ENCODE measurements at regions of chrX and their contacts with region 1.

Region 1: GRCh38 chrX:106999002-106999975 is 723 bp downstream of the MORC4 start:
- DNase-seq: peak; percentile 46 to 55 (median 55)
- H3K4me3 ChIP-seq: peak overlapping the region; percentile 23 to 53
- H3K4me3 Mint-ChIP-seq: peak overlapping the region; percentile 81 to 95 (median 92)
- H3K27ac ChIP-seq: peak overlapping the region; percentile 34
- H3K27ac Mint-ChIP-seq: peak overlapping the region; percentile 71 to 93 (median 81)
- H3K4me1 ChIP-seq: peaks cover 10% of the 10 kb centered on the region
- H3K4me1 Mint-ChIP-seq: peaks cover 5 to 22% (median 13%) of the 10 kb centered on the region in 4 donors
- H3K27me3 ChIP-seq: no peaks in the 10 kb centered on the region
- H3K27me3 Mint-ChIP-seq: no peaks in the 10 kb centered on the region

Region 2: GRCh38 chrX:106973433-106974149 is 25.7 kb before region 1 on chrX:
- CTCF ChIA-PET with region 1: no interaction called
- POLR2A ChIA-PET with region 1: no interaction called
- intact Hi-C with region 1: no loop called
- DNase-seq: no peak
- H3K4me3 ChIP-seq: no peak overlapping the region
- H3K4me3 Mint-ChIP-seq: no peak overlapping the region
- H3K27ac ChIP-seq: no peak overlapping the region
- H3K27ac Mint-ChIP-seq: no peak overlapping the region
- H3K4me1 ChIP-seq: no peaks in the 10 kb centered on the region
- H3K4me1 Mint-ChIP-seq: no peaks in the 10 kb centered on the region
- H3K27me3 ChIP-seq: no peaks in the 10 kb centered on the region
- H3K27me3 Mint-ChIP-seq: no peaks in the 10 kb centered on the region

Region 3: DNA sequence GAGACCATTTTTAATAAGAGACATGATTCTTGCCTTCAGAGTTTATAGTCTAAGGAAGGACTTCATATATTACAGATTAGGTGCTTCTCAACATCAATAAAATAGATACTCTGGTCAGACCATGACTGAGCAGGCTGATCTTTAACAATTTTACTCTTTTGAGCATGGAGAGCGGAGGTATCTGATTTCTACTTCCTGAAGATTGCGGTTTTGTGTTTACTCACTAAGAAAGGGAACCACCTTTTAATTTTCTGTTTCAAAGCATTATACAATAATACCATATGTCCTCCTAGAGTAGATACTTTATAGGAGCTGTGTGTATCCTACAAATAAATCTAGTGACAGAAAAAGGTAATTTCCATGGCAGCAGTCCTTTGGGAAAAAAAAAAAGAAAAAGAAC is 11.8 kb before region 1 on chrX:
- CTCF ChIA-PET with region 1: interaction called, 5 read pairs
- POLR2A ChIA-PET with region 1: interaction called, 9 read pairs
- intact Hi-C with region 1: loop called (anchors 1 kb)
- DNase-seq: peak in 2 of 5 donors; percentile 9 to 12
- H3K4me3 ChIP-seq: no peak overlapping the region
- H3K4me3 Mint-ChIP-seq: peak overlapping the region in 5 of 8 donors; percentile 7 to 51 (median 9)
- H3K27ac ChIP-seq: no peak overlapping the region
- H3K27ac Mint-ChIP-seq: peak overlapping the region in 1 of 7 donors; percentile 3
- H3K4me1 ChIP-seq: peaks cover 16% of the 10 kb centered on the region
- H3K4me1 Mint-ChIP-seq: peaks cover 3 to 13% (median 8%) of the 10 kb centered on the region in 4 donors
- H3K27me3 ChIP-seq: no peaks in the 10 kb centered on the region
- H3K27me3 Mint-ChIP-seq: no peaks in the 10 kb centered on the region

Region 4: GRCh38 chrX:107118322-107119147 is 119.2 kb after region 1 on chrX and contains the start of gene RBM41:
- CTCF ChIA-PET with region 1: interaction called, 4 read pairs
- POLR2A ChIA-PET with region 1: no interaction called
- intact Hi-C with region 1: loop called (anchors 5 kb)
- DNase-seq: peak; percentile 69 to 88 (median 75)
- H3K4me3 ChIP-seq: peak within 1 kb of the TSS; percentile 72 to 73
- H3K4me3 Mint-ChIP-seq: peak within 1 kb of the TSS; percentile 98 to 100 (median 99)
- H3K27ac ChIP-seq: peak within 1 kb of the TSS; percentile 59
- H3K27ac Mint-ChIP-seq: peak within 1 kb of the TSS; percentile 93 to 98 (median 97)
- H3K4me1 ChIP-seq: peaks cover 17% of the 10 kb centered on the region
- H3K4me1 Mint-ChIP-seq: peaks cover 22 to 47% (median 33%) of the 10 kb centered on the region in 4 donors
- H3K27me3 ChIP-seq: no peaks in the 10 kb centered on the region
- H3K27me3 Mint-ChIP-seq: no peaks in the 10 kb centered on the region
- total RNA-seq, gene RBM41: 27.8 to 29.8 TPM

Region 5: DNA sequence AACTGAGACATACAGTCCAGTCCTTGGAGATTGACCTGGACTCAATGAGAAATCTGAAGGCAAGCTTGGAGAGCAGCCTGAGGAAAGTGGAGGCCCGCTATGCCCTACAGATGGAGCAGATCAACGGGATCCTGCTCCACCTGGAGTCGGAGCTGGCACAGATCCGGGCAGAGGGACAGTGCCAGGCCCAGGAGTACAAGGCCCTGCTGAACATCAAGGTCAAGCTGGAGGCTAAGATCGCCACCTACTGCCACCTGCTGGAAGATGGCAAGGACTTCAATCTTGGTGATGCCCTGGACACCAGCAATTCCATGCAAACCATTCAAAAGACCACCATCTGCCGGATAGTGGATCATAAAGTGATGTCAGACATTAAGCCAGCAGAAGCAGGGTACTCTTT is 429.8 kb after region 1 on chrX:
- CTCF ChIA-PET with region 1: interaction called, 18 read pairs
- POLR2A ChIA-PET with region 1: no interaction called
- intact Hi-C with region 1: no loop called
- DNase-seq: peak in 4 of 5 donors; percentile 13 to 19 (median 18)
- H3K4me3 ChIP-seq: no peak overlapping the region
- H3K4me3 Mint-ChIP-seq: no peak overlapping the region
- H3K27ac ChIP-seq: no peak overlapping the region
- H3K27ac Mint-ChIP-seq: peak overlapping the region in 1 of 7 donors; percentile 77
- H3K4me1 ChIP-seq: no peaks in the 10 kb centered on the region
- H3K4me1 Mint-ChIP-seq: peaks cover 0 to 2% (median 0%) of the 10 kb centered on the region in 4 donors
- H3K27me3 ChIP-seq: no peaks in the 10 kb centered on the region
- H3K27me3 Mint-ChIP-seq: peaks cover 1 to 3% of the 10 kb centered on the region in 2 donors

Region 6: DNA sequence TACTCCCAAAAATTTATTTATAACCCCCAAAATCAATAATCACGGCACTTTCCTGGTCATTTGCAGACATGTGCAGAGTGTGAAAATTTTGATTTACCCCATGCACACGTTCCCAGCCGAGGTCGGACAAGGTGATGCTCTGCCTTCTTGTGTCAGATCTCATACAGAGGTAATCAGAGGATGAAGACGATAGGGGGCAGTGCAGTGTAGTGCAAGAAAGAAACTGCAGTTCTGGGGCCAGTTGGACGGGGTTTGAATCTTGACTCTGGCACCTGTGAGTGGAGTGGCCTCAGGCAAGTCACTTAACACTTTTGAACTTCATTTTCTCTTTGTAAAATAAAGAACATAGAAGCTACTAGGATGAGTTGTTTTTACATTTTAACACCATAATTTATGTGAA is 538.5 kb after region 1 on chrX:
- CTCF ChIA-PET with region 1: no interaction called
- POLR2A ChIA-PET with region 1: no interaction called
- intact Hi-C with region 1: no loop called
- DNase-seq: peak; percentile 19 to 28 (median 23)
- H3K4me3 ChIP-seq: no peak overlapping the region
- H3K4me3 Mint-ChIP-seq: no peak overlapping the region
- H3K27ac ChIP-seq: no peak overlapping the region
- H3K27ac Mint-ChIP-seq: no peak overlapping the region
- H3K4me1 ChIP-seq: no peaks in the 10 kb centered on the region
- H3K4me1 Mint-ChIP-seq: no peaks in the 10 kb centered on the region
- H3K27me3 ChIP-seq: no peaks in the 10 kb centered on the region
- H3K27me3 Mint-ChIP-seq: peaks cover 2 to 7% of the 10 kb centered on the region in 2 donors

Region 7: DNA sequence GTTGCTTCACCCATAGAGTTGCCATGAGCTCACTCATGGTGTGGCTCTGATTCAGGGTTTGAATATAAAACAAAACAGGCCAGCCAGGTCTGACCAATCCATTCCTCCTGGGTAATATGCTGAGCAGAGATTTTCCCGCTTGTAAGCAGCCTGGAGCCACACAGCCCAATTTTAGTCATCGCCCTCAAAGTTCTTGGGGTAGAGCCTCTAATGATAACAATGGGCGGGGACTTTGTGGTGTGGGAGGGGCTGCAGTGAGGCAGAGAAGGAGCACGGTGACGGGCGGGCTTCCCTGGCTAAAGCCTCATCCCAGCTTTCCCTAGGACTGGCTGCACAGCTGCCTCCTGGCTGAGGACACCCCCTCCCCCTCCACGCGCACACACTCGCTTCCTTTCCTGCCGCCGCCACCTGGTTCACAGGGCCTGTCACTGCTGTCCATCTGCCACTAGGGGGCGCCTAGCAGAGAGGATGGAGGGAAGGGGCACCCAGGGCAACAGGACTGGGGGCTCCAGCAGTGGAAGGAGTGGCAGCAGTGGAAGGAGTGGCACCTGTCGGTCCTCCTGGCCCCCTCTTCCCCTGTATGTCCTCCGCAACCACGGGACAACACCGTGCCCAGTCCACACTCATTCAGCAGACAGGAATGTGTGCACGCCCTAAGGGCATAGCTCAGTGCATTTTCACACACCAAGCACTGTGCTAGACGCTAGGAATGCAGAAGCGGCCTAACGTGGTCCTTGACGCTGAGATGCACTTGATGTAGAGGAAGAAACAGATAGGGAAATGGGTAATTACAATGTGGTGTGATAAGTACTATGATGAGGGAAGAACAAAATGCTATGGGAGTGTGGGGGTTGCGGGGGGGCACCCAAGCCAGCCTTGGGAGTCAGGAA is 655.8 kb after region 1 on chrX:
- CTCF ChIA-PET with region 1: interaction called, 3 read pairs
- POLR2A ChIA-PET with region 1: no interaction called
- intact Hi-C with region 1: loop called (anchors 10 kb)
- DNase-seq: peak; percentile 64 to 71 (median 67)
- H3K4me3 ChIP-seq: no peak overlapping the region
- H3K4me3 Mint-ChIP-seq: peak overlapping the region in 2 of 8 donors; percentile 2 to 9
- H3K27ac ChIP-seq: no peak overlapping the region
- H3K27ac Mint-ChIP-seq: peak overlapping the region in 5 of 7 donors; percentile 47 to 82 (median 57)
- H3K4me1 ChIP-seq: peaks cover 12% of the 10 kb centered on the region
- H3K4me1 Mint-ChIP-seq: peaks cover 11 to 15% (median 14%) of the 10 kb centered on the region in 4 donors
- H3K27me3 ChIP-seq: no peaks in the 10 kb centered on the region
- H3K27me3 Mint-ChIP-seq: no peaks in the 10 kb centered on the region